GM18951 (cell line): ENCODE measurements at regions of chr2 and their contacts with region 1.

Region 1: DNA sequence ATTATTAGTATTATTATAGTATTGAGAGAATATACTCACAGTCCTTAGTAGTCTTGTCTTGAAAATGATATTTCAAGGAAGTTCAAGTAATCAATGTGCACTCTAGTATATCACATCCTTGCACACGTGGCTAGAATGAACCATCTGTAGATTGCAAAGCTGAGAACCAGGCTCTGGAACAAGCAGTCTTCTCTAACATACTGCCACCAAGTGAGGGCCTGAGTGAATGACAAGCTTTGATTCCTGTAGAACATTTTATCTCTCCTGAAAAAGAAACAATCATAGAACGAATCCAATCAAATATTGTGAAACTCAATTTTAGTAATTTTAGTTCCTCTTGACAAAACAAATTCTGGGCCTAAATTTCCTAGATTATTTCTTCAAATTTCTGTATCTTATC is 55.3 kb upstream of the SULT1C3 start:
- POLR2A ChIP-seq: no peak

Region 2: DNA sequence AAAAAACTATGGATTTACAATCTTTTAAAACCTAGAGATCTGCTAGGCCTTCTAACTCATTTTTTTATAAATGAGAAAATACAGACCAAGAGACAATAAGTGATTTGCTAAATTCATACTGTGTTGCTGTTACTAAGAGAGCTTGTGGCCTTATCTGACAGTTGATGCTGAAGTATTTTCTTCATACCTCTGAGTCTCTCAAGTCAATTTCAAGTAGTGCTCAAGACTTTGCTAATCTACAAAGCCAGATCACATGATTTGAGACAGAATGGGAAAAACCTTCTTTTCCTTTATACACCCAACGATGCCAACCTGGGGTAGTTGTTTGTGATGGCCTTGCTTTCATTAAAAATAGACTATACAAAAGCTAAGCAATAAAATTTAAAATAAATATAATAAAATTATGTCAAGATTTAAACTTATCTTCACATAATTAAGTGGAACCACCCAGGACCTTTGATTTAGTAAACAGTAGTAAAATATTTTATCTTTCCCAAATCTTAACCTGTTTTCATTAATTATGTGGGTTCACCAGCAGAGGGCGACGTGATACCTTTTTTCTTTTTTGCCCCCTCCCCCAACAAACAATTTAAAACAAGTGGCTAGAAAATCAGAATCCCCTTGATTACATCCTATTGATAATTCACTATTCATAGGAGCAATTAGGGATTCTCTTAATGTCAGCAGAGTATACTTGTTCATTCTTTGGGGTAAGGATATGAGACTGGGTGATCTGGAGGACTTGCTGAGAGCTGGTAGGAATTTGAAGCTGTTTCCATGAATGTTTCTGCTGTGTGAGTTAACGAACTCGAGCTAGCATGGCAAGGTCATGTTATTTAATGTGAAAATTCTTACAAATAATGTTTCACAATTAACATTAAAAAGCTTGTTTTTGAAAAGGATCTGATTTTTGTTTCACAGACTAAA is 247.7 kb before region 1 on chr2:
- in situ Hi-C with region 1: loop called (anchors 25 kb)
- POLR2A ChIP-seq: no peak

Region 3: GRCh38 chr2:108428286-108429009 is 244.0 kb after region 1 on chr2:
- in situ Hi-C with region 1: no loop called
- POLR2A ChIP-seq: no peak